Common myeloid progenitor, CD34-positive (primary cell): ENCODE measurements at regions of chr5 and their contacts with region 1.

Region 1: GRCh38 chr5:60668686-60669304 is 31.2 kb downstream of the DEPDC1B start:
- DNase-seq: peak; percentile 52 to 79 (median 74)
- H3K4me3 ChIP-seq: no peak overlapping the region
- H3K27ac ChIP-seq: no peak overlapping the region
- H3K4me1 ChIP-seq: peaks cover 0 to 8% (median 2%) of the 10 kb centered on the region in 4 experiments
- H3K27me3 ChIP-seq: no peaks in the 10 kb centered on the region

Region 2: DNA sequence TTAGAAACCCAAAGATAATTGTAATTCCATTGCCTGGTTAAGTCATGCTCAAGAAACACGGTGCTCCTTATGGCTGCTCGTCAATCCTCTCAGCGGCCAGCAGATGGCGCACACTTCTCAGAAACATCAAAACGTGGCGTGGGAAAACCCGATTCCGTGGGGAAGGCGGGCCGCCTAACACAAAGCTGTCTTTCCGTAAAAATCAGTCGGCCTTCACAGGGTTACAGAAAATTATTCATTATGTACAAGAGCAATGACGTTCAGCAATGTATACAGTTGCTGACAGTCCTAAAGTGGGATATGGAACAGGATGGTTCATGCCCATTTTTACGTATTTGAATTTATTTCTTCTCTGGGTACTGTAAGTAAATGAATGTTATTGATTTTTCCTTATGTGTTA is 858.8 kb before region 1 on chr5:
- CTCF ChIA-PET with region 1: interaction called, 19 read pairs
- POLR2A ChIA-PET with region 1: no interaction called
- DNase-seq: peak; percentile 73 to 82 (median 80)
- H3K4me3 ChIP-seq: peak overlapping the region in 3 of 7 experiments; percentile 27 to 66 (median 40)
- H3K27ac ChIP-seq: no peak overlapping the region
- H3K4me1 ChIP-seq: peaks cover 0 to 9% (median 2%) of the 10 kb centered on the region in 4 experiments
- H3K27me3 ChIP-seq: peaks cover 0 to 2% (median 0%) of the 10 kb centered on the region in 5 experiments

Region 3: DNA sequence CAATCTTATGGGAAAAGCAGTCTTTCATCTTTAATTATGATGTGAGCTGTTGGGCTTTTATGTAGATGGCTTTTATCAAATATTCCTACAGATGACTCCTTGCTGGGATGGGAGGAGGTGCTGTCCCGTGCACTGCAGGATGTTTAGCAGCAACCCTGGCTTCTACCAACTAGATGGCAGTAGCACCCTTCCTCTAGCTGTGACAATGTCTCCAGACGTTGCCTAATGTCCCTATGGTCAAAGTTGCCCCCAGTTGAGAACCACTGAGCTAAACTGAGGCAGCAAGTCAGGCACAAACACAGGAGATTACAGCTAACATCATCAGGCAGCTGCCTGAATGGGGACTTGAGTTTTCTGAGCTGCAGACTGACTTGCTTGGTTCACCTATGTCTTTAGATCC is 373.4 kb before region 1 on chr5:
- CTCF ChIA-PET with region 1: interaction called, 20 read pairs
- POLR2A ChIA-PET with region 1: no interaction called
- DNase-seq: peak; percentile 39 to 43 (median 42)
- H3K4me3 ChIP-seq: no peak overlapping the region
- H3K27ac ChIP-seq: no peak overlapping the region
- H3K4me1 ChIP-seq: no peaks in the 10 kb centered on the region
- H3K27me3 ChIP-seq: no peaks in the 10 kb centered on the region